Dorsolateral prefrontal cortex (tissue), 120 donors: ENCODE measurements at regions of chr9 and their contacts with region 1.

Region 1: DNA sequence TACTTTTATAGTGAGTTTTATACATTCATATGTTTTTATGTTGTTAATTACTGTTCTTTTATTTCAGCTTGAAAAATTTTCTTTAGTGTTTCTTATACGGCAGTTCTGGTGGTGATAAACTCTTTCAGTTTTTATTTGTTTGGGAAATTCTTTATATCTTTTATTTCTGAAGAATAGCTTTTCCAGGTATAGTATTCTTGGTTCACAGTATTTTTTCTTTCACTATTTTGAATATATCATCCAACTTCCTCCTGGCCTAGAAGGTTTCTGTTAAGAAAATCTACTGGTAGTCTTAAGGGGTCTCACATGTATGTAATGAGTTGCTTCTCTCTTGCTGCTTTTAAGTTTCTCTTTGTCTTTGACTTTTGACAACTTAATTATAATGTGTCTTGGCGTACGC is 79.4 kb downstream of the NXNL2 start:
- DNase-seq: no peak
- H3K4me3 ChIP-seq: no peak overlapping the region
- H3K27ac ChIP-seq: no peak overlapping the region
- H3K27me3 ChIP-seq: no peaks in the 10 kb centered on the region
- CTCF ChIP-seq: no peak

Region 2: GRCh38 chr9:88251903-88252302 is 362.5 kb before region 1 on chr9:
- intact Hi-C with region 1: no loop called
- DNase-seq: no peak
- H3K4me3 ChIP-seq: no peak overlapping the region
- H3K27ac ChIP-seq: no peak overlapping the region
- H3K27me3 ChIP-seq: no peaks in the 10 kb centered on the region
- CTCF ChIP-seq: no peak

Region 3: GRCh38 chr9:89109666-89110065 is 495.3 kb after region 1 on chr9:
- intact Hi-C with region 1: loop called in 1 of 2 experiments (anchors 10 kb)
- DNase-seq: no peak
- H3K4me3 ChIP-seq: no peak overlapping the region
- H3K27ac ChIP-seq: no peak overlapping the region
- H3K27me3 ChIP-seq: no peaks in the 10 kb centered on the region
- CTCF ChIP-seq: no peak